ENCODE measurements at regions of chr12 and their contacts with region 1.

Region 1: GRCh38 chr12:27014085-27014858 is at the start of gene TM7SF3:
- DNase-seq: peak; percentile 96
- ATAC-seq: peak; percentile 88
- H3K4me3 Mint-ChIP-seq: peak within 1 kb of the TSS; percentile 91
- H3K27ac Mint-ChIP-seq: peak within 1 kb of the TSS; percentile 92
- H3K4me1 Mint-ChIP-seq: peaks cover 43% of the 10 kb centered on the region
- H3K27me3 Mint-ChIP-seq: no peaks in the 10 kb centered on the region
- CTCF ChIP-seq: peak; percentile 99
- total RNA-seq, gene TM7SF3: 36.7 to 37.6 TPM

Region 2: GRCh38 chr12:26853303-26854030 is 160.8 kb before region 1 on chr12:
- CTCF ChIA-PET with region 1: interaction called, 9 read pairs
- POLR2A ChIA-PET with region 1: no interaction called
- intact Hi-C with region 1: loop called (anchors 2 kb)
- DNase-seq: peak; percentile 86
- ATAC-seq: peak; percentile 97
- H3K4me3 Mint-ChIP-seq: no peak overlapping the region
- H3K27ac Mint-ChIP-seq: no peak overlapping the region
- H3K4me1 Mint-ChIP-seq: no peaks in the 10 kb centered on the region
- H3K27me3 Mint-ChIP-seq: peaks cover 3% of the 10 kb centered on the region
- CTCF ChIP-seq: peak; percentile 75

Region 3: DNA sequence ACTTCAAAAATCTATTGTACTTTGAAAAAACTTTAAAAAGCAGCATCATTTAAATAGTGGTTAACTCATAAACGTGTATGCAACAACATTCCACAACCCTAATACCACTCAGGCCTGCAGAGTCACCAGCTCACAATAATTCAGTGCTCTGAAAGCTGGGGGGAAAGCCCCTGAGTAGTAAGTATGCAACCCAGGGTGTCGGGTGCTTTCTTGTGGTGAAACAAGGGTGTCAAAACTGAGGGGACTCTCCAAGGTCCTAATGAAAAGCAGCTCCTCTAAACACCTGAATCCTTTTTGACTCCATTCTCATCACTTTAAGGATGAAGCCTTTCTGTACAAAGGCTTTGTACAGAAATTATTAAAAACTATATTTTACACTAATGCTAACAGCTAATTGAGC is 42.3 kb before region 1 on chr12:
- CTCF ChIA-PET with region 1: interaction called, 5 read pairs
- POLR2A ChIA-PET with region 1: interaction called, 4 read pairs
- intact Hi-C with region 1: loop called (anchors 1 kb)
- DNase-seq: peak; percentile 87
- ATAC-seq: peak; percentile 100
- H3K4me3 Mint-ChIP-seq: no peak overlapping the region
- H3K27ac Mint-ChIP-seq: no peak overlapping the region
- H3K4me1 Mint-ChIP-seq: peaks cover 23% of the 10 kb centered on the region
- H3K27me3 Mint-ChIP-seq: no peaks in the 10 kb centered on the region
- CTCF ChIP-seq: no peak

Region 4: DNA sequence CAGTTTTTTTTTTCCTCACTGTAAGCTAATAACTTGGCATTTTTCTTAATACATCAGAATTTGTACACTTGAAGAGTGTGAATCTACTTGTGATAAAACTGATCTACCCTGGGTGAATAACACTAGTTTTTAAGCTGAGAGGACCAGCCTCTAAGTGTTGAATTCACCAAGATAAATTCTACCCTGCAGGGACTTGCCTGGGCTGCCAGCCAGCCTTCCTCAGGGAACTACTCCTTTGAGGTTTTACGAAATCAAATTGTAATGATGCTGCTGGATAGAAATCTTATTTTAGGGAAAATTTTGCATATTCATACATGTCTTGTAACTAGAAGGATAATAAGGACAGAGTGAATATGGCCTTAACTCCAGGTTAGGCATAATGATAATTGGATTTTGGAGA is 10.0 kb after region 1 on chr12:
- CTCF ChIA-PET with region 1: interaction called, 11 read pairs
- POLR2A ChIA-PET with region 1: interaction called, 7 read pairs
- intact Hi-C with region 1: no loop called
- DNase-seq: no peak
- ATAC-seq: no peak
- H3K4me3 Mint-ChIP-seq: peak overlapping the region; percentile 6
- H3K27ac Mint-ChIP-seq: no peak overlapping the region
- H3K4me1 Mint-ChIP-seq: peaks cover 32% of the 10 kb centered on the region
- H3K27me3 Mint-ChIP-seq: no peaks in the 10 kb centered on the region
- CTCF ChIP-seq: no peak

Region 5: GRCh38 chr12:27243804-27244683 is 229.8 kb after region 1 on chr12 and contains the start of gene STK38L:
- CTCF ChIA-PET with region 1: interaction called, 5 read pairs
- POLR2A ChIA-PET with region 1: interaction called, 5 read pairs
- intact Hi-C with region 1: loop called (anchors 10 kb)
- DNase-seq: peak; percentile 99
- ATAC-seq: peak; percentile 98
- H3K4me3 Mint-ChIP-seq: peak within 1 kb of the TSS; percentile 94
- H3K27ac Mint-ChIP-seq: peak within 1 kb of the TSS; percentile 94
- H3K4me1 Mint-ChIP-seq: peaks cover 40% of the 10 kb centered on the region
- H3K27me3 Mint-ChIP-seq: no peaks in the 10 kb centered on the region
- CTCF ChIP-seq: no peak
- total RNA-seq, gene STK38L: 23.5 to 27.6 TPM

Measured in activated CD8-positive, alpha-beta T cell treated with anti-CD3 and anti-CD28 coated beads for 36 hours (primary cell).